ENCODE measurements at regions of chr17 and their contacts with region 1.

Region 1: GRCh38 chr17:3668279-3669085 is at the starts of genes EMC6 and TAX1BP3:
- DNase-seq: peak; percentile 95
- ATAC-seq: peak; percentile 89
- H3K4me3 ChIP-seq: peak within 1 kb of the TSS; percentile 89 to 97 (median 95)
- H3K27ac ChIP-seq: peak within 1 kb of the TSS; percentile 96
- H3K4me1 ChIP-seq: peaks cover 44% of the 10 kb centered on the region
- H3K27me3 ChIP-seq: no peaks in the 10 kb centered on the region; a peak in 1 of 5 replicates
- CTCF ChIP-seq: no peak
- EP300 ChIP-seq: no peak
- POLR2A ChIP-seq: peak; percentile 96 to 97
- RAD21 ChIP-seq: 0 out of 2 replicates have a peak, but pooled peaks have one; percentile 37
- total RNA-seq, gene EMC6: 42.2 and 45.1 TPM in 2 replicates
- total RNA-seq, gene TAX1BP3: 44.5 and 45.1 TPM in 2 replicates

Region 2: DNA sequence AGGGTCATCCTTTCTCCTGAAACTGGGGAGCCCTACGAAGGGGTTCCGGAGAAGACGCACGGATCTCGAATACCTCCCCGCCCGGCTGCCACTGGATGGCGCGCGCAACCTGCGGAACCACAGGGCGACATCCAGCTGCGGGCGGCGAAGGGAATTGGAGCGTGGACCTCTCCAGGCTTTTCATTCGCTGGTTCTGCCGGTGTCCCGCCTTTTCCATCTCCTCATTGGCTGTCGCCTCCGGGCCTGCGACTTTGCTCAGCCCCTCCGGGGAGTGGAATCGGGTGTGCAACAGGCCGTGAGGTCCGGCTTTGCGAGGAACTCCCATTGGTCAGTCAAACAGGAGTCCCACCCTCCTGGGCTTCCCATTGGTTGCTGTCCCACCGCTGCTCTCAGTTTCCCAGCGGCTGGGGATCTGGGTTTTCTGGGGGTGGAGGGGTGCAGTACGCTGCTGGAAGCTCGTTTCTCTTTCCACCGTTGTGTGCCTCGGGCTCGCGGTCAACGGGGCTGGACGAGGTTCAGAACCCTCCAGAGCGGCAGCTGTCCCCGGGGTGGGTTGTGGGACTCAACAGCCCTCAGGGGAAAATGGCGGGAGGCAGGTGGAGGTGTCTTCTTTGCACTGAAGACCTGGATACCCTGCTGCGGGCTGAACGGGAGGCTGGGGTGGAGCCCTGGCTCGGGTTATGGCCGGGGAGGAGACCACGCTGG is 619.6 kb before region 1 on chr17:
- CTCF ChIA-PET with region 1: no interaction called
- POLR2A ChIA-PET with region 1: no interaction called
- in situ Hi-C with region 1: loop called (anchors 10 kb)
- intact Hi-C with region 1: no loop called
- DNase-seq: peak; percentile 93
- ATAC-seq: peak; percentile 99
- H3K4me3 ChIP-seq: peak overlapping the region; percentile 53 to 77 (median 58)
- H3K27ac ChIP-seq: no peak overlapping the region
- H3K4me1 ChIP-seq: 0 out of 2 replicates have a peak, but pooled peaks cover 12% of the 10 kb centered on the region
- H3K27me3 ChIP-seq: no peaks in the 10 kb centered on the region
- CTCF ChIP-seq: peak; percentile 97
- EP300 ChIP-seq: no peak
- POLR2A ChIP-seq: peak in 1 of 2 experiments; percentile 57; a peak in 1 of 4 replicates
- RAD21 ChIP-seq: peak; percentile 94

Region 3: GRCh38 chr17:3622977-3623594 is 45.4 kb before region 1 on chr17:
- CTCF ChIA-PET with region 1: no interaction called
- POLR2A ChIA-PET with region 1: no interaction called
- in situ Hi-C with region 1: no loop called
- intact Hi-C with region 1: no loop called
- DNase-seq: no peak
- ATAC-seq: peak; percentile 27; the same call in 1 of the 3 replicates
- H3K4me3 ChIP-seq: no peak overlapping the region
- H3K27ac ChIP-seq: no peak overlapping the region
- H3K4me1 ChIP-seq: no peaks in the 10 kb centered on the region
- H3K27me3 ChIP-seq: no peaks in the 10 kb centered on the region
- CTCF ChIP-seq: no peak
- EP300 ChIP-seq: no peak
- POLR2A ChIP-seq: no peak
- RAD21 ChIP-seq: no peak

Region 4: DNA sequence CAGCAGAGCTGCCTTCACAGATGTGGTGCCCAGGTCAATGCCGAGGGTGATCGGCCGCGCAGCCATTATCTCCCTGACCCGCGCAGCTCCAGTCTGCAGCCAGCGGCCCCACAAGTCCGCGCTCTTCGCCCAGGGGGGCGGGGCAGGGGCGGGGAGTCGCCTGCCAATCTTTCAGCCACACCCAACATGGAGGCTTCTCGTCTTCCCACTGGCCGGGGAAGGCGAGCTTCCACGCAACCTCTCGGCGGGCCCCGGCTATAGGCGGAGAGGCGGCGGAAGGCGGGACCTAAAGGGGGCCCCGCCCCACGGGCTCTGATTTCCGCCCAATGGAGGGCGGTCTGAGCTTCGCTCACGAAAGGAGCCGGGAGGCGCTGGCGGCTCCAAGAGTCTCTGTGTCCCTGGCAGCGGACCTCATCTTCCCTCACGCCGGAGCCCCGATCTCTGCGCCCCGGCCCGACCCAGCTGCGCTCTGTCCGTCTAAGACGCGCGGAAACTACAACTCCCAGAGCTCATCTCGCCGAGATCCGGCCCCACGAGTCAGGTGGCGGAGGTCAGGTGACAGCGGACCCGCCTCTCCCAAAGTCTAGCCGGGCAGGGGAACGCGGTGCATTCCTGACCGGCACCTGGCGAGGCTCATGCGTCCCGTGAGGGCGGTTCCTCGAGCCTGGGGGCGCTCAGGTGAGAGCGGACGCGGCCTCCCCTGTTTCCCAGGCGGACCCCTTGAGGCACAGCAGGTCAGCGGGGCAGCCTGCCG is 32.2 kb before region 1 on chr17 and contains the starts of genes CTNS and SHPK:
- CTCF ChIA-PET with region 1: no interaction called
- POLR2A ChIA-PET with region 1: interaction called, 74 read pairs
- in situ Hi-C with region 1: no loop called
- intact Hi-C with region 1: no loop called
- DNase-seq: peak; percentile 95
- ATAC-seq: peak; percentile 91
- H3K4me3 ChIP-seq: peak within 1 kb of the TSS; percentile 89 to 97 (median 90)
- H3K27ac ChIP-seq: peak within 1 kb of the TSS; percentile 98
- H3K4me1 ChIP-seq: peaks cover 63% of the 10 kb centered on the region
- H3K27me3 ChIP-seq: no peaks in the 10 kb centered on the region; a peak in 1 of 5 replicates
- CTCF ChIP-seq: no peak
- EP300 ChIP-seq: no peak; a peak in 1 of 4 replicates
- POLR2A ChIP-seq: peak; percentile 91 to 98
- RAD21 ChIP-seq: no peak; the same call in 1 of the 2 replicates
- total RNA-seq, gene CTNS: 6.5 and 13.7 TPM in 2 replicates
- total RNA-seq, gene SHPK: 25.2 and 30.9 TPM in 2 replicates

Region 5: GRCh38 chr17:3647769-3648555 is 20.5 kb before region 1 on chr17:
- CTCF ChIA-PET with region 1: no interaction called
- POLR2A ChIA-PET with region 1: interaction called, 12 read pairs
- in situ Hi-C with region 1: no loop called
- intact Hi-C with region 1: no loop called
- DNase-seq: peak; percentile 52
- ATAC-seq: peak; percentile 93
- H3K4me3 ChIP-seq: no peak overlapping the region
- H3K27ac ChIP-seq: peak overlapping the region; percentile 36
- H3K4me1 ChIP-seq: peaks cover 13% of the 10 kb centered on the region
- H3K27me3 ChIP-seq: no peaks in the 10 kb centered on the region
- CTCF ChIP-seq: peak; percentile 86
- EP300 ChIP-seq: no peak
- POLR2A ChIP-seq: no peak
- RAD21 ChIP-seq: no peak; the same call in 1 of the 2 replicates

Region 6: GRCh38 chr17:3683054-3683511 is 14.6 kb after region 1 on chr17:
- CTCF ChIA-PET with region 1: no interaction called
- POLR2A ChIA-PET with region 1: interaction called, 21 read pairs
- in situ Hi-C with region 1: no loop called
- intact Hi-C with region 1: no loop called
- DNase-seq: peak; percentile 27
- ATAC-seq: peak; percentile 65
- H3K4me3 ChIP-seq: no peak overlapping the region
- H3K27ac ChIP-seq: no peak overlapping the region
- H3K4me1 ChIP-seq: peaks cover 10% of the 10 kb centered on the region
- H3K27me3 ChIP-seq: peaks cover 2 to 7% of the 10 kb centered on the region in 2 experiments; a peak in 4 of 5 replicates
- CTCF ChIP-seq: peak; percentile 91
- EP300 ChIP-seq: no peak
- POLR2A ChIP-seq: no peak
- RAD21 ChIP-seq: peak; percentile 44

Region 7: GRCh38 chr17:3723556-3724369 is 55.3 kb after region 1 on chr17 and contains the start of gene HASPIN:
- CTCF ChIA-PET with region 1: no interaction called
- POLR2A ChIA-PET with region 1: interaction called, 13 read pairs
- in situ Hi-C with region 1: no loop called
- intact Hi-C with region 1: no loop called
- DNase-seq: peak; percentile 83
- ATAC-seq: peak; percentile 88
- H3K4me3 ChIP-seq: peak within 1 kb of the TSS; percentile 65 to 99 (median 95)
- H3K27ac ChIP-seq: peak within 1 kb of the TSS; percentile 80
- H3K4me1 ChIP-seq: peaks cover 49% of the 10 kb centered on the region
- H3K27me3 ChIP-seq: no peaks in the 10 kb centered on the region; a peak in 1 of 5 replicates
- CTCF ChIP-seq: no peak; the same call in 1 of the 2 replicates
- EP300 ChIP-seq: no peak
- POLR2A ChIP-seq: peak; percentile 79 to 89
- RAD21 ChIP-seq: no peak; the same call in 1 of the 2 replicates
- total RNA-seq, gene HASPIN: 7.8 and 8.1 TPM in 2 replicates

Region 8: DNA sequence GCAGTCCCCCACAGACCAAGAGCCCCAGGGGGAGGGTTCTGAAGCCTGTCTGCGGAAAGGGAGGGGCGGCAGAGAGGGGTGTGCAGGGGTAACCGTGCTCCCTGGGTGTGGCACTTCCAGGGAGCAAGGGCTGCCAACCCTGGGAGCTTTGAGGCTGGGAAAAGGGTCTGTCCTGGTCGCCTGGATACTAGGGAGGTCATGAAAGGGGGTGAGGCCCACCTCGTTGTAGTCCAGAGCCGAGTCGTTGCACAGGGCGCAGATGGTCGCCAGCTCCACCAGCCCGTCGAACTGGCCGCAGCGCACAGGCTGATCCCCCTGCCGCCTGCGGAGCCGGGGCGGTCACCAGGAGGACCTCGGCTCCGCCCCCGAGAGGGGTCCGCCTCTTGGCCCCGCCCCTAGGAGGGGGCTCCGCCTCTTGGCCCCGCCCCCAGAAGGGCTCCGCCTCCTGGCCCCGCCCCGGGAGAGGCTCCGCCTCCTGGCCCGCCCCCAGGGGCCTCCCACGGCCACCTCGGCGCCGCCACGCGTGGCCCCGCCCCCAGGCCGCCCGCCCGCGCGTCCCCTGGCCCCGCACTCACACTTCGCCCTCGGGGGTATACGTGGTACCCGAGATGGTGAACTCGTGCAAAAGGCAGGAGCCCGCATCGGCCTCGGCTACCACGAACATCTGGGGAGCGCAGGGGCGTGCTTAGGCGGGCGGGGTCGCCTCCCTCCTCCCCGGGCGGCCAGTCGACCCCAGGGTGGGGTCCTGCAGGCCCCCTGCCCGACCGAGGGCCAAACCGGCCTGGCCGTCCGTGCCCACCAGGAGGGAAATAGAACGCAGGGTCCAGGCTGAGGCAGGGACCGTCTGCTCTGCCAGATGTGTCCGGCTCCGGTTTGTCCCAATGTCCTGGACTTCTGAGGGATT is 276.3 kb after region 1 on chr17:
- CTCF ChIA-PET with region 1: no interaction called
- POLR2A ChIA-PET with region 1: no interaction called
- in situ Hi-C with region 1: no loop called
- intact Hi-C with region 1: no loop called
- DNase-seq: no peak
- ATAC-seq: peak; percentile 30; the same call in 2 of the 3 replicates
- H3K4me3 ChIP-seq: no peak overlapping the region
- H3K27ac ChIP-seq: no peak overlapping the region
- H3K4me1 ChIP-seq: peaks cover 15% of the 10 kb centered on the region; the same call in 1 of the 2 replicates
- H3K27me3 ChIP-seq: peaks cover 4 to 28% of the 10 kb centered on the region in 2 experiments; a peak in 3 of 5 replicates
- CTCF ChIP-seq: no peak
- EP300 ChIP-seq: no peak
- POLR2A ChIP-seq: no peak
- RAD21 ChIP-seq: no peak

Measured in HepG2 (cell line).